PC-3 (cell line): ENCODE measurements at regions of chr11 and their contacts with region 1.

Region 1: GRCh38 chr11:93543292-93543977 is at the start of gene SMCO4:
- DNase-seq: peak; percentile 92
- ATAC-seq: peak; percentile 84
- H3K4me3 ChIP-seq: peak within 1 kb of the TSS; percentile 86
- H3K27ac ChIP-seq: 0 out of 2 replicates have a peak within 1 kb of the TSS, but pooled peaks have one; percentile 3
- H3K4me1 ChIP-seq: peaks cover 15% of the 10 kb centered on the region
- H3K27me3 ChIP-seq: 0 out of 2 replicates have a peak, but pooled peaks cover 3% of the 10 kb centered on the region
- CTCF ChIP-seq: peak; percentile 70
- total RNA-seq, gene SMCO4: 23.0 and 34.2 TPM in 2 replicates

Region 2: DNA sequence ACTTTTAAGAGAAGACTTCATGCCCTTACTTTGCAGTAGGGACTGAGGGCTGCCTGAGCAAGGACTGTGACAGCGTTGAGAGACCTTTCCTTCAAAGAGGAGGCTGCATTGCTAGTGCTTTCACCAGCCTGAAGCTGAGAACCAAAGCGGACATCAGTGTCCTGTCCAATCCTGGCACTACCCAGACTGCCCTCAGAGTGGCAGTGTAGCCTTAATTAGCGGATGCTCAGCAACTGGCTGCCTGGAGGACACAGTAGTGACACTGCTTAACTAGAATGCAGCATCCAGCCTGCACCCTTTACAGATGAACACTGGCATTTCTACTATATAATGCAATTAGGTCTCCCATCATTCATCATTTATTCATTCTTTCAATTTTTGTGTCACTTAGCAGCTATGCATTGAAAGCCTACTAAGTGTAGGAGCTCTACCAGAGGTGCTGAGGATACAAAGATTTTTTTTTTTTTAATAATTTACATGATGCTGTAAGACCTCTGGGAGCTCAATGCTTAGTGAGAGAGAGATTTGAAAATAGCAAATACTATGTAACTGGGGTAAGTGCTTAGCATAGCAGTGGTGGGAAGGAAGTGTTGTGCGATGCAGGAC is 308.7 kb before region 1 on chr11:
- CTCF ChIA-PET with region 1: no interaction called
- POLR2A ChIA-PET with region 1: interaction called, 3 read pairs
- intact Hi-C with region 1: loop called (anchors 1 kb)
- DNase-seq: peak; percentile 92
- ATAC-seq: peak; percentile 99
- H3K4me3 ChIP-seq: no peak overlapping the region
- H3K27ac ChIP-seq: no peak overlapping the region
- H3K4me1 ChIP-seq: no peaks in the 10 kb centered on the region
- H3K27me3 ChIP-seq: peaks cover 10% of the 10 kb centered on the region
- CTCF ChIP-seq: peak; percentile 97

Region 3: DNA sequence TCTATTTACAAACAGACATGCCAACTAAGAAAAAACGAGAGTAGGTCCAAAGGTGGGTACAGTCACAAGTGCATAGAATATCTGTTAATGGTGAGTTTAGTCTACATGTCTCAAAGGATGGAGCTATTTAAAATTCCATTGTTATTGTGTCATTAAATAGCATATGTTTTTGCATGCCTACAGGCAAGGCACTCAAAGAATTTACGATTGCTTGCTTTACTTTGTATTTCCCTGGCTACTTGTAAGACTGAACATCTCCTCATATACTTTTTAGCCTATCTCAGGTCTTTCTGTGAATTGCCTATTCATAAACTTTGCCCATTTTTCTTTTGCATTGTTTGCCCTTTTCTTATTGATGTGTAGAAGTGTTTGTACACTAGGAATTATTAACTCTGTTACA is 173.2 kb before region 1 on chr11:
- CTCF ChIA-PET with region 1: no interaction called
- POLR2A ChIA-PET with region 1: no interaction called
- intact Hi-C with region 1: loop called (anchors 1 kb)
- DNase-seq: peak; percentile 80
- ATAC-seq: peak; percentile 98
- H3K4me3 ChIP-seq: no peak overlapping the region
- H3K27ac ChIP-seq: no peak overlapping the region
- H3K4me1 ChIP-seq: peaks cover 14% of the 10 kb centered on the region
- H3K27me3 ChIP-seq: no peaks in the 10 kb centered on the region
- CTCF ChIP-seq: no peak

Region 4: GRCh38 chr11:93476796-93477195 is 66.6 kb before region 1 on chr11:
- CTCF ChIA-PET with region 1: interaction called, 5 read pairs
- POLR2A ChIA-PET with region 1: no interaction called
- intact Hi-C with region 1: loop called (anchors 1 kb)
- DNase-seq: peak; percentile 98
- ATAC-seq: peak; percentile 79
- H3K4me3 ChIP-seq: peak overlapping the region; percentile 11; the same call in 1 of the 2 replicates
- H3K27ac ChIP-seq: peak overlapping the region; percentile 89
- H3K4me1 ChIP-seq: peaks cover 44% of the 10 kb centered on the region
- H3K27me3 ChIP-seq: no peaks in the 10 kb centered on the region
- CTCF ChIP-seq: no peak

Region 5: GRCh38 chr11:93498641-93499040 is 44.8 kb before region 1 on chr11:
- CTCF ChIA-PET with region 1: no interaction called
- POLR2A ChIA-PET with region 1: no interaction called
- intact Hi-C with region 1: loop called (anchors 1 kb)
- DNase-seq: peak; percentile 67
- ATAC-seq: peak; percentile 83
- H3K4me3 ChIP-seq: peak overlapping the region; percentile 0; the same call in 1 of the 2 replicates
- H3K27ac ChIP-seq: peak overlapping the region; percentile 67
- H3K4me1 ChIP-seq: peaks cover 25% of the 10 kb centered on the region
- H3K27me3 ChIP-seq: no peaks in the 10 kb centered on the region
- CTCF ChIP-seq: no peak

Region 6: GRCh38 chr11:93652161-93652597 is 108.7 kb after region 1 on chr11:
- CTCF ChIA-PET with region 1: interaction called, 5 read pairs
- POLR2A ChIA-PET with region 1: no interaction called
- intact Hi-C with region 1: loop called (anchors 1 kb)
- DNase-seq: peak; percentile 92
- ATAC-seq: peak; percentile 33
- H3K4me3 ChIP-seq: no peak overlapping the region
- H3K27ac ChIP-seq: no peak overlapping the region
- H3K4me1 ChIP-seq: peaks cover 6% of the 10 kb centered on the region; the same call in 1 of the 2 replicates
- H3K27me3 ChIP-seq: peaks cover 26% of the 10 kb centered on the region
- CTCF ChIP-seq: peak; percentile 95